ENCODE measurements at regions of chr3 and their contacts with region 1.

Region 1: GRCh38 chr3:111717601-111718000 is 122.5 kb upstream of the ZBED2 start:
- DNase-seq: no peak
- H3K4me3 ChIP-seq: no peak overlapping the region
- H3K27me3 ChIP-seq: no peaks in the 10 kb centered on the region
- CTCF ChIP-seq: peak; percentile 87

Region 2: GRCh38 chr3:111285694-111286093 is 431.9 kb before region 1 on chr3:
- CTCF ChIA-PET with region 1: no interaction called
- POLR2A ChIA-PET with region 1: no interaction called
- DNase-seq: no peak
- H3K4me3 ChIP-seq: no peak overlapping the region
- H3K27me3 ChIP-seq: no peaks in the 10 kb centered on the region
- CTCF ChIP-seq: no peak

Region 3: GRCh38 chr3:111668912-111669488 is 48.6 kb before region 1 on chr3:
- CTCF ChIA-PET with region 1: interaction called, 88 read pairs
- POLR2A ChIA-PET with region 1: no interaction called
- DNase-seq: no peak
- H3K4me3 ChIP-seq: no peak overlapping the region
- H3K27me3 ChIP-seq: no peaks in the 10 kb centered on the region
- CTCF ChIP-seq: peak; percentile 75

Region 4: DNA sequence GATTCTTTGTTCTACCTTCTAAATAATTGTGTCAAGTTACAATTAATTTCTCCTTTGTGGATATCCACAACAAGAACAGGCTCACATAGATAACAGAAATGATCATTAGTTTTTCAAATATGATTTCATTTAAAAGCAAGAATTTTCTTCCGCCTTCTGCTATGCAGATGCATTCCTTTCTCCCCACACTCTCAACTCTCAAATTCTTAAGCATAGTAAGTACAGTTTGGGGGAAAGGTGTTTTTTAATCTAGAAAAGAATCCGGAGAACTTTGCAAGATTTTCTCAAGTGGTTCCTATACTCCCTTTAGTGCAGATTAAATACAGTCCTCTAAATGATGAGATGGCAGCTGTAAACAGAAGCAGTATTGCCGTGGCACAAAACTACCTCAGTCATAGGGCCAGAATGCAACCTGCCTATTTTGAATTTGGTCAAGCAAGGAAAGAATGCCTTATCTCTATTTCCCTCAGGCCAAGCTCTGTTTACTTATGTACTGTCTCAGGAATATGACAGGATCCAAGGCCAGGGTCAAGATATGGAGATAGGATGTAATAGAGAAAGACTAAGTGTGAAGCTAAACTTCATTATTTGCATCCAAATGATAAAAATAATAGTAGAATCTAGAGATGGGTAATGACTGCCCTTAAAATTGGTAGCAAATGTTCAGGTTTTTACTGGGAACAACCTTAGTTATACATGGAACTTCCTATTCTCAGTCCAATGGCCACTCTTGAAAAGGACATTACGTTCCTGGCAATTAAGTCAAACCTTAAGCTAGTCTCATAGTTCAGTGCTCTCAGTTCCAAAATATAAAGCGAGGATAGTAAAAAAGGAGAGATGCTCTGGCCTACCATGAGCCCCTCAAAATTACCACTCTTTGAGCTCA is 64.2 kb after region 1 on chr3:
- CTCF ChIA-PET with region 1: interaction called, 10 read pairs
- POLR2A ChIA-PET with region 1: no interaction called
- DNase-seq: no peak
- H3K4me3 ChIP-seq: no peak overlapping the region
- H3K27me3 ChIP-seq: no peaks in the 10 kb centered on the region
- CTCF ChIP-seq: no peak

Region 5: DNA sequence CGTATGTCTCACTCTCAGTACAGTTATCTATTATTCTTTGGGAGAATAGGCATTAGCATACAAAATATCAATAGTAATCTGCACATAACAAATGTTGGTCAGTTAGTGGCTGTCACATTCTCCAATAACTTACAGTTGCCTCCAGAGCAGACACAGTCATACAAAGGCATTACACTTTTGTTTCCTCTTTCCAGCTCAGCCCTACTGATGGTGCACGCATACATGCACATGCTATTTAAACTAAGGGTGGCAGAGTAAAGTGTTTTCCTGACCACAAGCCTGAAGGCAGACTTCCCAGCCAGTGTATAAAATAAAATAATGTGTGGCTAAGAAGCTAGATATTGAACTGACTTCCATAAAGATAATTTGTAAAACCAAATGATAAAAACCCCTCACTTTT is 189.1 kb after region 1 on chr3:
- CTCF ChIA-PET with region 1: interaction called, 11 read pairs
- POLR2A ChIA-PET with region 1: no interaction called
- DNase-seq: no peak
- H3K4me3 ChIP-seq: no peak overlapping the region
- H3K27me3 ChIP-seq: no peaks in the 10 kb centered on the region
- CTCF ChIP-seq: no peak

Region 6: DNA sequence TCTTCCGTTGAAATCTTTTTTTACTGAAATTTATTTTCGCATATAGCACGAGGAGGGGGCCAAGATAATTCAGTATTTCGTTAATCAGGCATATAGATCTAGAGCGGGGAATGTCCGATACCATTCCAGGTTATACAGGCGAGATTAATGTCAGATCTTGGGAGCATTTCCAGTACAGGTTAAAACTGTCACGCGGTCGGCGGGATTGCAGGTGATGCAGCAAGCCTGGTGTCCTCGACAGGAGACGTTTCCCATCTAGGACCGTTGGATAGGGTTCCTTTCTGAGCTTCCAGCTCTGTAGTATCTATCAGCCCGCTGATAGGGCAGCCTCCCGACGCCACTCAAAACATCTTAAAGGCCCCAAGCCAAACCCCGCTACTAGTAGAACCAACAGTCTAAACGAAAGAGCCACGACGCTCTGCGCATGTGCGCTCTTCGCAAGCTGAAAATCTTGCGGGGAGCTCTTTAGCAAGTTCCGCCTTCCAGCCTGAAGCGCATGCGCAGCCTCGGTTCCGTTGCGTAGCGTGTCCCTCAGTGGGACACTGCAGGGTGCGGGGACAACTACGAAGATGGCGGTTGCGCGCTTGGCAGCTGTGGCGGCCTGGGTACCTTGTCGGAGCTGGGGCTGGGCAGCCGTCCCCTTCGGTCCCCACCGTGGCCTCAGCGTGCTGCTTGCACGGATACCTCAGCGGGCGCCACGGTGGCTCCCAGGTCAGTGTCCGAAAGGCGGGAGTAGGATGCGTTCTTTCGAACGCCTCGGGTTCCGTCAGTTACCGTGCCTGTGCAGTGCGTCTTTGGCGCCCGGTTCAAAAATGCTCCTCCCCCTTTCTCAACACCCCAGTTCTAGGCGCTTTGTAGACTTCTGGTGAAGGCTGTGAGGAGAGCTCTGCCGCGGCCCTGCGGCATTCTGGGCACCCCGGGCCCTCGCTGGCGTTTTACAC is 261.2 kb after region 1 on chr3 and contains the start of gene ABHD10:
- CTCF ChIA-PET with region 1: interaction called, 157 read pairs
- POLR2A ChIA-PET with region 1: no interaction called
- DNase-seq: peak; percentile 95
- H3K4me3 ChIP-seq: peak within 1 kb of the TSS; percentile 78
- H3K27me3 ChIP-seq: no peaks in the 10 kb centered on the region
- CTCF ChIP-seq: no peak
- polyA plus RNA-seq, gene ABHD10: 12.6 and 21.1 TPM in 2 replicates

Region 7: DNA sequence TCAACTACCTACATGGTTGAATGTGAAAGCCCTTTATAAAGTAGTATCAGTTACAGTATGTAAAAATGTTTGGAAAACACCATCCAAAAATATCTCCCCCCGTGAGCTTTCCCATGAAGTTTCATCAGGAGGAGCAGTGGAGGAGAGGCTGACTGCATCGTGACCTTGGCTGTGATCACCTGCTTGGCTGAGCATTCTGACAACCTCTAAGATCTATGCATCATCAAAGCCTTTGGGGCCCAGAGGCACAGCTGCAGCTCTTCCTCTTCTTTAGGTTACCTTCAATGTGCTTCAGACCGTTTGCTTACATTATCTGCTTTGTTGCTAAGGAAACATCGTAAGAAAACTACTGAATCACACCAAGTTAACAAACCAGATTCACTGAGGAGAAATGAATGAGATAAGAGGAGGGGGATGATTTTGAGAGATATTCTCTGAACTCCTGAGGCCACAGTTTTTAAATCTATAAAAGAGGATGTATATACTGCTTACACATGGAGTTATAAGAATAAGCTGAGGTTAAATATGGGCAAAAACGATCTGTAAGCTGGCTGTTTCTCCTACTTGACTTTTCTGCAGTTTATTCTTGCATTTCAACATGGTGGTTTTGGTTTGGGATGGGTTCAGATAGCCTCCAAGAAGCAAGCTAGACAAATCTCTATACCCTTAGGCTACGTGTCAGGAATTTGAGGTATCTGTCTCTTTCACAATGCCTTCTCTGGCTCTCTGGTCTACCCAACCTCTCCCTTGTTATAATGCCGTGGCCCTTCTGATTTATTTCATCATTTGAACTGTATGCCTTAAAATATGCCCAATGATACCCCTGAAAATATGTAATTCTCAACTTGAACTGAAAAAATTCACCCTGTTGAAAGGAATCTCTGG is 411.5 kb after region 1 on chr3:
- CTCF ChIA-PET with region 1: no interaction called
- POLR2A ChIA-PET with region 1: no interaction called
- DNase-seq: peak; percentile 37
- H3K4me3 ChIP-seq: no peak overlapping the region
- H3K27me3 ChIP-seq: no peaks in the 10 kb centered on the region
- CTCF ChIP-seq: no peak